B cell (primary cell): ENCODE measurements at regions of chr7 and their contacts with region 1.

Region 1: DNA sequence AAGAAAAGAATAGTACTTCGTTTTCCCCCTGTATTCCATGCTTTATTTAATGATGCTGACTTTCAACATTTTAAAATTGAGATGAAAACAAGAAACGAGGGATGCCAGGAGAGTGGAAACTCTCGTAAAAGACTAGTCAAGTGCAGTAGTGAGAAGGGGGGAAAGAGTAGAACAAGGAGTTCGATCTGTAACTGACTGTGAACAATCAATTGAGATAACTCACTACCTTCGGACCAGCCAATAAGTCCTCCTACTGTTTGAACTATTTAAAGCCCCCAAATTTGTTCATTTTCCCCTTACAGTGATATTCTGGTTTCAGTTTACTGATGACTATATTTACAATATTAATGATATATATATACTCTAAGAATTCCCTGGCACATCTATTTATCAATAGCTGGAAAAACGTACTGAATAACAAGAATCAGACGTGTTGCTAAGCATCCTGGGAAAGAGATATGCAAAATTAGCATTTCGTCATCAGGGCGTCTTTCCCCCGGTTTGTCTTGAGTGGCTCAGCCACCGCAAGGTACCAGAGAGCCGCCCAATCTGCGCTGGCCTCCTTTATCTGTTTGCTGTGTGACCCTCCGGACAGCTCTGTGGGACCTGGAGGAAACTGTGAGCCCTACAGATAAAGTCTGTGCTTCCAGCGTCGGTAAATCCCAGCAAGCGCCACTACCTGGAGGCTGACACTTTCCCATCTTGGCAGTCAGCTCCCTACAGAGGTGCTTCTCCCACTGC is 41.1 kb downstream of the PDIA4 start:
- DNase-seq: peak; percentile 92
- ATAC-seq: peak; percentile 87
- H3K4me3 ChIP-seq: peak overlapping the region; percentile 78 to 98 (median 89)
- H3K4me3 Mint-ChIP-seq: peak overlapping the region; percentile 99
- H3K27ac ChIP-seq: peak overlapping the region; percentile 84 to 90
- H3K27ac Mint-ChIP-seq: peak overlapping the region; percentile 94
- H3K4me1 ChIP-seq: peaks cover 39 to 43% of the 10 kb centered on the region in 2 donors
- H3K4me1 Mint-ChIP-seq: peaks cover 49% of the 10 kb centered on the region
- H3K27me3 ChIP-seq: no peaks in the 10 kb centered on the region
- H3K27me3 Mint-ChIP-seq: no peaks in the 10 kb centered on the region
- CTCF ChIP-seq: no peak

Region 2: GRCh38 chr7:148884299-148885022 is 102.7 kb before region 1 on chr7:
- CTCF ChIA-PET with region 1: interaction called, 3 read pairs
- POLR2A ChIA-PET with region 1: interaction called, 3 read pairs
- intact Hi-C with region 1: loop called (anchors 1 kb)
- DNase-seq: peak; percentile 96
- ATAC-seq: peak; percentile 93
- H3K4me3 ChIP-seq: peak overlapping the region; percentile 17 to 81 (median 64)
- H3K4me3 Mint-ChIP-seq: peak overlapping the region; percentile 91
- H3K27ac ChIP-seq: peak overlapping the region; percentile 75 to 99
- H3K27ac Mint-ChIP-seq: peak overlapping the region; percentile 93
- H3K4me1 ChIP-seq: peaks cover 11 to 16% of the 10 kb centered on the region in 2 donors
- H3K4me1 Mint-ChIP-seq: peaks cover 14% of the 10 kb centered on the region
- H3K27me3 ChIP-seq: no peaks in the 10 kb centered on the region
- H3K27me3 Mint-ChIP-seq: no peaks in the 10 kb centered on the region
- CTCF ChIP-seq: no peak

Region 3: DNA sequence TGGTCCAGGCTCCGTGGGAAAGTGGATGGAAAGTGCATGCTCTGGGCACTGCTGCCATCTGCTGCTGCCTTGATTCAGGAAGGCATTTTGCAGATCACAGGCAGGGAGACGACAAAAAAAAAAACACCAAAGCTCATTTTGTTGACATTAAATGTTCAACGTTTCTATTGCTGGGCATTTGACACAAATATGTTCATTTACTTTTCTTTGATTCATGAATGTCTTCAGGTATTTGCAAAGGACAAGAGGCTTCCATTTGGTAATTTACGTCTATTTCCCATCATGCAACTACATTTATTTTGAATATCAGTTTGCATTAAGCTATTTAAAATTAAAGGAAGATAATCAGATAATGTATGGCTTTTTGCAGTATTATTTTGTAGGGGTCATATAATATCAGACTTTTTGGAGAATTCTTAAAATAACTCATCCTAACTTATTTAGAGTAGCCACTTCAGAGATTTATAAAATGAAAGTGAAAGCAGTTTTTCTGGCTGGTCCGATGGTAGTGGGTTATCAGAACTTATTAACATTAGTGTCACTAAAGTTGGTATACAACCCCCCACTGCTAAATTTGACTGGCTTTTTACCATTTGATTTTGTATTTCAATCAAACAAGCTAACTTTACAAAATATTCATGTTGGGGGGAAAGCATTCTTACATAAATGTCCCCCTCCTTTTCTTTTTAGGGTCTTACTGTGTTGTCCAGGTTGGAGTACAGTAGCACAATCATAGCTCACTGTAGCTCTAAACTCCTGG is 24.2 kb before region 1 on chr7:
- CTCF ChIA-PET with region 1: interaction called, 16 read pairs
- POLR2A ChIA-PET with region 1: interaction called, 3 read pairs
- intact Hi-C with region 1: loop called (anchors 1 kb)
- DNase-seq: peak; percentile 87
- ATAC-seq: peak; percentile 60
- H3K4me3 ChIP-seq: peak overlapping the region; percentile 66 to 100 (median 75)
- H3K4me3 Mint-ChIP-seq: peak overlapping the region; percentile 98
- H3K27ac ChIP-seq: peak overlapping the region; percentile 56 to 89
- H3K27ac Mint-ChIP-seq: peak overlapping the region; percentile 90
- H3K4me1 ChIP-seq: peaks cover 9 to 27% of the 10 kb centered on the region in 2 donors
- H3K4me1 Mint-ChIP-seq: peaks cover 28% of the 10 kb centered on the region
- H3K27me3 ChIP-seq: no peaks in the 10 kb centered on the region
- H3K27me3 Mint-ChIP-seq: no peaks in the 10 kb centered on the region
- CTCF ChIP-seq: peak; percentile 78

Region 4: DNA sequence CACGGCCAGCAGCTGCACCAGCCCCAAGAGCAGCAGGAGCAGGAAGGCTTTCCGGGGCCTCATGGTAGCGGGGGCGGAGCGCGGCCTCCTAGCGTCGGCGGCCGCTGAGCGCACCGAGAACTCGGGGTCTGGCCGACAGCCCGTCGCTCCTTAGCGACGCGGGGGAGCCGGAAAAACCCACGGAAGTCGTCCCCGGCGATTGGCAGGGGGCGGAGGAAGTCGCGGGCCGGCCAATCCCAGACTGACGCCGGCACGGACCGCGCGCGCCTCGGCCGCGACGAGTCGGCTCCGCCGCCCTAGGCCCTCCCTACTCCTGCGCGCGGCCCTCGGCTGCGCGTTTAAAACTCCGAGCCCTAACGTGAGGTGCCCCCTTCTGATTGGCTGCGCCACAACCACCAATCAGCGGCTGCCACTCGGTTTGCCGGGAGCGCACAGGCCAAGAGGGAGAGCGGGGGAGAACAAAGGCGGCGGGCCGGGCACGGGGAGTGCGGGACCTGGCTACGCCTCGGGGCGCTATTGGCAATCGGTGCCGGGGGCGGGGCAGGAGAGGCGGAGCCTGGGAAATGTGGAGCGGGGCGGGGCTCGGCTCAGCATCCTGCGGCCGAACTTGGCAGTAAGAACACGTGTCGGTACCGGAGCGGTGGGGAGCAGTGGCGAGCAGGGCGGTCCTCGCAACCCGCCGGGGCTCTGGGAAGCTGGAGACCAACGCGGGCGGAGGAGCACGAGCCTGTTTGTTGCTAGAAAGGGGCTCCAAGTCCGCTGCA is 41.3 kb after region 1 on chr7 and contains the start of gene PDIA4:
- CTCF ChIA-PET with region 1: interaction called, 6 read pairs
- POLR2A ChIA-PET with region 1: no interaction called
- intact Hi-C with region 1: loop called (anchors 1 kb)
- DNase-seq: peak; percentile 99
- ATAC-seq: peak; percentile 86
- H3K4me3 ChIP-seq: peak within 1 kb of the TSS; percentile 51 to 77 (median 73)
- H3K4me3 Mint-ChIP-seq: peak within 1 kb of the TSS; percentile 93
- H3K27ac ChIP-seq: peak within 1 kb of the TSS; percentile 39 to 94
- H3K27ac Mint-ChIP-seq: peak within 1 kb of the TSS; percentile 91
- H3K4me1 ChIP-seq: peaks cover 19 to 21% of the 10 kb centered on the region in 2 donors
- H3K4me1 Mint-ChIP-seq: peaks cover 39% of the 10 kb centered on the region
- H3K27me3 ChIP-seq: no peaks in the 10 kb centered on the region
- H3K27me3 Mint-ChIP-seq: no peaks in the 10 kb centered on the region
- CTCF ChIP-seq: peak; percentile 47
- total RNA-seq, gene PDIA4: 34.7 and 36.5 TPM in 2 replicates

Region 5: GRCh38 chr7:149125863-149126661 is 138.9 kb after region 1 on chr7 and contains the start of gene ZNF425:
- CTCF ChIA-PET with region 1: interaction called, 3 read pairs
- POLR2A ChIA-PET with region 1: no interaction called
- intact Hi-C with region 1: loop called (anchors 1 kb)
- DNase-seq: peak; percentile 95
- ATAC-seq: peak; percentile 84
- H3K4me3 ChIP-seq: peak within 1 kb of the TSS; percentile 64 to 98 (median 88)
- H3K4me3 Mint-ChIP-seq: peak within 1 kb of the TSS; percentile 97
- H3K27ac ChIP-seq: peak within 1 kb of the TSS; percentile 85 to 89
- H3K27ac Mint-ChIP-seq: peak within 1 kb of the TSS; percentile 99
- H3K4me1 ChIP-seq: peaks cover 12 to 14% of the 10 kb centered on the region in 2 donors
- H3K4me1 Mint-ChIP-seq: peaks cover 22% of the 10 kb centered on the region
- H3K27me3 ChIP-seq: no peaks in the 10 kb centered on the region
- H3K27me3 Mint-ChIP-seq: no peaks in the 10 kb centered on the region
- CTCF ChIP-seq: peak; percentile 89
- total RNA-seq, gene ZNF425: 2.8 and 3.3 TPM in 2 replicates

Region 6: DNA sequence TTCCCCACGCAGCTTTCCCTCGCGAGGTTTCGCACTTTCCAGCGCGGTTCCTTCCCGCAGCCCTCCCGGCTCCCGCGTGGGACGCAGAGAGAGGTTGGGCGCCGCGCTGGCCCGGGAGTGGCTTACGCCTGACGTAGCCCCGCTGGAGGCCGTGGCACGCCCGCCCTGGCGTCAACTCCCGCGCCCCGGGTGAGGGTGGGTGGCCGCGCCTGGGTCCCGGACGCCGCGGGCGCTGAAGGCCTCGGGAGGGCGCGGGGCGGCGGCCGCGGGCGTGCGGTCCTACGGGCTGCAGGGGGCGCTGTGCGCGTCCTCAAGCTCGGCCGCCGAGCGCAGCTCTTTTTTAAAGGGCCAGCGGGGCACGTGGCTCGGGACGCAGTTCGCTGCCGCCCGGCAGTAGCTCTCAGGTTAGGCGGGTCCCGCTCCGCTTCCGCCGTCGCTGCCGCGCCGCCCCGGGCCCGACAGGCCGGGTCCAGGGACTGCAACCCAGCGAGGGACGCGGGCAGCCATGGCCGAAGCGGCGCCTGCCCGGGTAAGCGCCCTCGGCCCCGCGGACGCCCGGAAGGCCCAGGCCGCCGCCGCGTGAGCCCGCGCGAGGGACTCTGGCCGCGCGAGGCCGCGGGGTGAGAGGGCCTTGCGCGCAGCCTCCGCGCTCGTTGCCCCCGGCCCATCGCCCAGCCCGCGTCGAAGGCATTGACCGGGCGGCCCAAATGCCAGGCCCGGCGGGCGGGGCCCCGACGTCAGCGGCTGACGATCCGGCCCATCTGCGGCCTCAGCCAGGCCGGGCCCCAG is 274.8 kb after region 1 on chr7 and contains the start of gene ZNF783:
- CTCF ChIA-PET with region 1: interaction called, 3 read pairs
- POLR2A ChIA-PET with region 1: no interaction called
- intact Hi-C with region 1: loop called (anchors 5 kb)
- DNase-seq: peak; percentile 94
- ATAC-seq: peak; percentile 93
- H3K4me3 ChIP-seq: peak within 1 kb of the TSS in 4 of 5 experiments; percentile 64 to 75 (median 68)
- H3K4me3 Mint-ChIP-seq: peak within 1 kb of the TSS; percentile 94
- H3K27ac ChIP-seq: peak within 1 kb of the TSS; percentile 69 to 76
- H3K27ac Mint-ChIP-seq: peak within 1 kb of the TSS; percentile 92
- H3K4me1 ChIP-seq: peaks cover 13 to 17% of the 10 kb centered on the region in 2 donors
- H3K4me1 Mint-ChIP-seq: peaks cover 21% of the 10 kb centered on the region
- H3K27me3 ChIP-seq: no peaks in the 10 kb centered on the region
- H3K27me3 Mint-ChIP-seq: no peaks in the 10 kb centered on the region
- CTCF ChIP-seq: peak; percentile 86
- total RNA-seq, gene ZNF783: 43.8 and 44.8 TPM in 2 replicates